HepG2 (cell line): ENCODE measurements at regions of chrX and their contacts with region 1.

Region 1: GRCh38 chrX:155094468-155095061 is 23.3 kb downstream of the BRCC3 start:
- DNase-seq: peak; percentile 20
- ATAC-seq: peak; percentile 67
- H3K4me3 ChIP-seq: no peak overlapping the region
- H3K27ac ChIP-seq: no peak overlapping the region
- H3K4me1 ChIP-seq: no peaks in the 10 kb centered on the region
- H3K27me3 ChIP-seq: no peaks in the 10 kb centered on the region
- CTCF ChIP-seq: peak; percentile 53
- EP300 ChIP-seq: no peak
- POLR2A ChIP-seq: no peak
- RAD21 ChIP-seq: no peak

Region 2: GRCh38 chrX:154750301-154751202 is 344.0 kb before region 1 on chrX and contains the start of gene GAB3:
- CTCF ChIA-PET with region 1: no interaction called
- POLR2A ChIA-PET with region 1: no interaction called
- in situ Hi-C with region 1: no loop called
- intact Hi-C with region 1: no loop called
- DNase-seq: no peak
- ATAC-seq: peak; percentile 75
- H3K4me3 ChIP-seq: peak within 1 kb of the TSS in 1 of 3 experiments; percentile 52; a peak in 1 of 6 replicates
- H3K27ac ChIP-seq: no peak within 1 kb of the TSS
- H3K4me1 ChIP-seq: no peaks in the 10 kb centered on the region
- H3K27me3 ChIP-seq: peaks cover 2 to 24% of the 10 kb centered on the region in 2 experiments; a peak in 4 of 5 replicates
- CTCF ChIP-seq: peak; percentile 5; the same call in 1 of the 2 replicates
- EP300 ChIP-seq: no peak
- POLR2A ChIP-seq: no peak
- RAD21 ChIP-seq: no peak
- total RNA-seq, gene GAB3: not detected in 2 replicates

Region 3: DNA sequence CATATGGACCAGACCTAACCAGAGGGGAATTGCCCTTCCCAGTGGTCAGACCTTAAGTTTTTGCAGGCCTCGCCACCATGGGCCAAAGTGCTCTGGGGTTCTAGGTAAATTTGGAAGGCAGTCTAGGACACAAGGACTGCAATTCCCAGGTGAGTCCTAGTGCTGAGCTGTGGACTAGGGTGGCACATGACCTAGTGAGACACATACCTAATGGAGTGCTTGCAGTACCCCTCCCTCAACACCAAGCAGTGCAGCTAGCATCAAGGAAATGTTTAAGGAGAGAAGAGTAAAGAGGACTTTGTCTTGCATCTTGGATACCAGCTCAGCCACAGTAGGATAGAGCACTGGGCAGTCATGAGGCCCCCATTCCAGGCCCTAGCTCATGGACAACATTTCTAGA is 37.5 kb after region 1 on chrX:
- CTCF ChIA-PET with region 1: interaction called, 8 read pairs
- POLR2A ChIA-PET with region 1: no interaction called
- in situ Hi-C with region 1: no loop called
- intact Hi-C with region 1: loop called (anchors 2 kb)
- DNase-seq: no peak
- ATAC-seq: no peak
- H3K4me3 ChIP-seq: no peak overlapping the region
- H3K27ac ChIP-seq: no peak overlapping the region
- H3K4me1 ChIP-seq: peaks cover 13% of the 10 kb centered on the region
- H3K27me3 ChIP-seq: no peaks in the 10 kb centered on the region
- CTCF ChIP-seq: no peak
- EP300 ChIP-seq: no peak
- POLR2A ChIP-seq: no peak
- RAD21 ChIP-seq: no peak

Region 4: GRCh38 chrX:155148724-155149537 is 54.4 kb after region 1 on chrX:
- CTCF ChIA-PET with region 1: interaction called, 3 read pairs
- POLR2A ChIA-PET with region 1: no interaction called
- in situ Hi-C with region 1: no loop called
- intact Hi-C with region 1: loop called (anchors 1 kb)
- DNase-seq: peak; percentile 15
- ATAC-seq: peak; percentile 47; the same call in 2 of the 3 replicates
- H3K4me3 ChIP-seq: no peak overlapping the region
- H3K27ac ChIP-seq: no peak overlapping the region
- H3K4me1 ChIP-seq: peaks cover 7% of the 10 kb centered on the region; the same call in 1 of the 2 replicates
- H3K27me3 ChIP-seq: no peaks in the 10 kb centered on the region
- CTCF ChIP-seq: peak; percentile 51
- EP300 ChIP-seq: no peak
- POLR2A ChIP-seq: no peak
- RAD21 ChIP-seq: no peak

Region 5: GRCh38 chrX:155819966-155820491 is 725.5 kb after region 1 on chrX:
- CTCF ChIA-PET with region 1: no interaction called
- POLR2A ChIA-PET with region 1: no interaction called
- in situ Hi-C with region 1: loop called (anchors 10 kb)
- intact Hi-C with region 1: no loop called
- DNase-seq: peak; percentile 49
- ATAC-seq: peak; percentile 75
- H3K4me3 ChIP-seq: no peak overlapping the region
- H3K27ac ChIP-seq: no peak overlapping the region
- H3K4me1 ChIP-seq: no peaks in the 10 kb centered on the region
- H3K27me3 ChIP-seq: no peaks in the 10 kb centered on the region
- CTCF ChIP-seq: peak; percentile 73
- EP300 ChIP-seq: no peak
- POLR2A ChIP-seq: no peak
- RAD21 ChIP-seq: no peak; the same call in 1 of the 2 replicates